Vagina (tissue), 2 donors: ENCODE measurements at regions of chr5 and their contacts with region 1.

Region 1: GRCh38 chr5:116502651-116503095 is 72.0 kb downstream of the SEMA6A start:
- DNase-seq: no peak
- H3K4me3 ChIP-seq: no peak overlapping the region
- H3K27ac ChIP-seq: no peak overlapping the region
- H3K4me1 ChIP-seq: peaks cover 24% of the 10 kb centered on the region
- H3K27me3 ChIP-seq: no peaks in the 10 kb centered on the region
- CTCF ChIP-seq: no peak
- POLR2A ChIP-seq: no peak

Region 2: GRCh38 chr5:116522356-116523136 is 19.9 kb after region 1 on chr5:
- intact Hi-C with region 1: loop called (anchors 2 kb)
- DNase-seq: no peak
- H3K4me3 ChIP-seq: no peak overlapping the region
- H3K27ac ChIP-seq: no peak overlapping the region
- H3K4me1 ChIP-seq: peaks cover 14% of the 10 kb centered on the region
- H3K27me3 ChIP-seq: no peaks in the 10 kb centered on the region
- CTCF ChIP-seq: no peak
- POLR2A ChIP-seq: no peak